AG04450 (cell line): ENCODE measurements at regions of chr2 and their contacts with region 1.

Region 1: DNA sequence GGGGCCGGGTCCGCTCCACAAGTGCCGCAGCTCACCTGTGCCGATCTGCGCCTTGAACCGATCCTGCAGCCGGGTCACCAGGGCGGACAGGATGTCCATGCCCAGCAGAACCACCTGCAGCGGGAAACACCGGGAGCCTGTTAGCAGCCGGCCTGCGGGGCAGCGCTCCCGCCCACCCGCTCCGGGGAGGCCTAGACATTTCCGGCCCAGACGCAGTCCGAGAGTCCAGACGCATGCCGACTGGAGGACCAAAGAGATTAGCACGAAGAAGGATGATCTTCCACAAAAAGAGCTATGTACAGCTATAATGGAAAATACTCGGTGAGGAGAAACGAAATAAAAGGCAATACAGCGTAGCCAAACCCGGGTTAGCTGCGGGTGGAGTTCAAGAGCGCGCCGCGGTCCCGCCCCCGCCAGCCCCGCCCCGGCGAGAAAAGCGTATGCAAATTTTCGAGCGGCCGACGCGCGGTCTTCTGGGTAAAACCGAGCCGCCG is 421 bp upstream of the RNU4ATAC start:
- DNase-seq: peak; percentile 24
- H3K4me3 ChIP-seq: peak overlapping the region; percentile 80
- H3K27ac ChIP-seq: peak overlapping the region; percentile 100
- H3K27me3 ChIP-seq: no peaks in the 10 kb centered on the region
- CTCF ChIP-seq: no peak

Region 2: DNA sequence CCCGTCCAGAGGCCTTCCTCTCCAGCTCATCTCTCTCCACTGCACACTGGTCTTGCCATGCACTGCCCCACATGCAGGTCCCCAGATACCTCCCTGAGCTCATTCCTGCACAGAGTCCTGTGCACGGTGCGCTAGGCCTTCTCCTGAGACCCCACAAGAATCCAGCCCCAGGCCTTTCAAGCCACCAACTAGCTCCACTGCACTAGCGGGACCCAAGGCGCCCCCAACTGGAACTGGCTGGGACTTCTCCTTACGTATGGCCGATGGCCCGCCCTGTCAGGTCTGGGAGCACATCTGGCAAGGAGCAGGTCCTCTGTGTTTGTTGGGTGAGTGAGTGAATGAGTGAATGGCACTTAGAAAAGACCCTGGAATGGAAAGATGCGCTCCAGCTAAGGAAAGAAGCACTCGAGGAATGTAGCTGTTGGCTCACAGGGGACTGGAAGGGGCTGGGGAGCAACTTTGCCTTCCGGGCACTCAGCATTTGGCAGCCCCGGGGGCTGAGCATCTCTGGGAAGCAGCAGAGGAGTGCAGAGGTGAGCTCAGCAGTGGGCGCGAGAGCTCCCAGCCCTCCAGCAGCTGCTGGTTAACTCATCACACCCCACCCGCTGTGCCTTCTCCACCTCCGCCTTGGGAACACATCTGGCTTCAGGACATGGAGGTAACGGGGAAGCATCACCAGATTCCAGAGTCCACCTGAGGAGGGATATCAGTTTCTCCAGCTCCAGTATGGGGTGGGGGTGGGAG is 571.5 kb before region 1 on chr2:
- CTCF ChIA-PET with region 1: no interaction called
- POLR2A ChIA-PET with region 1: no interaction called
- DNase-seq: no peak
- H3K4me3 ChIP-seq: no peak overlapping the region
- H3K27ac ChIP-seq: no peak overlapping the region
- H3K27me3 ChIP-seq: no peaks in the 10 kb centered on the region
- CTCF ChIP-seq: peak; percentile 37

Region 3: DNA sequence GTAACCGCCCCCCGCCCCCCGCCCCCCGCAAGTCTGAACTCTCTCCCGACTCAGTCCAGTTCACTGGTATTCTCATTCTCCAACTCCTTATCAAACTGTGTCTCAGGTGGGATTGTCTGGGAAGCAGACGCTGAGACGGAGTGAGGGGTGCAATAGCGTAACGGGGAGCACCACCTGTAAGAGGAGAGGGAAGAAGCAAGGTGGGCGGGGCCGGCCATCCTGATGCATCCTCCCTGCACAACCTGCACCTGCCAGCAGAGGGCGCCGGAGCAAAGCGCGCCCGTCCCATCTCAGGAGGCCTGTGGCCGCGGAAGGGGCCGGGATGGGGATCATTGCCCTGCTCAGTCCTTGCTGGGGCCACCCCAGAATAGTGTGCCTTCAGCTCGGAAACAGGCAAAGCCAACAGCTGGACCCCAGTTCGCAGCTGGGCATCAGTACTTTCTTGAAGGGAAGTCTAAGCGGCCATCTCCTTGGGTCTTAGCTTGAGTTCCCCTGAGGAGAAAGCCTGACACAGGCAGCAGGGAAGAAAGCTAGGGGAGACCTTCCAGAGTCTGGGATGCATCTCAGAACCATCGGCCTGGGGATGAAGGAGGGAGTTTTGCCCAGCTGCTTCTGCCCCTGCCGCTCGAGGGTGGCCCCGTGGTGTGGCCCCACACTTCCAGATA is 453.2 kb before region 1 on chr2:
- CTCF ChIA-PET with region 1: interaction called, 4 read pairs
- POLR2A ChIA-PET with region 1: interaction called, 14 read pairs
- DNase-seq: no peak
- H3K4me3 ChIP-seq: no peak overlapping the region
- H3K27ac ChIP-seq: no peak overlapping the region
- H3K27me3 ChIP-seq: peaks cover 34% of the 10 kb centered on the region
- CTCF ChIP-seq: peak; percentile 83

Region 4: GRCh38 chr2:121400201-121400600 is 130.1 kb before region 1 on chr2:
- CTCF ChIA-PET with region 1: interaction called, 10 read pairs
- POLR2A ChIA-PET with region 1: interaction called, 17 read pairs
- DNase-seq: peak; percentile 24
- H3K4me3 ChIP-seq: no peak overlapping the region
- H3K27ac ChIP-seq: no peak overlapping the region
- H3K27me3 ChIP-seq: no peaks in the 10 kb centered on the region
- CTCF ChIP-seq: no peak

Region 5: DNA sequence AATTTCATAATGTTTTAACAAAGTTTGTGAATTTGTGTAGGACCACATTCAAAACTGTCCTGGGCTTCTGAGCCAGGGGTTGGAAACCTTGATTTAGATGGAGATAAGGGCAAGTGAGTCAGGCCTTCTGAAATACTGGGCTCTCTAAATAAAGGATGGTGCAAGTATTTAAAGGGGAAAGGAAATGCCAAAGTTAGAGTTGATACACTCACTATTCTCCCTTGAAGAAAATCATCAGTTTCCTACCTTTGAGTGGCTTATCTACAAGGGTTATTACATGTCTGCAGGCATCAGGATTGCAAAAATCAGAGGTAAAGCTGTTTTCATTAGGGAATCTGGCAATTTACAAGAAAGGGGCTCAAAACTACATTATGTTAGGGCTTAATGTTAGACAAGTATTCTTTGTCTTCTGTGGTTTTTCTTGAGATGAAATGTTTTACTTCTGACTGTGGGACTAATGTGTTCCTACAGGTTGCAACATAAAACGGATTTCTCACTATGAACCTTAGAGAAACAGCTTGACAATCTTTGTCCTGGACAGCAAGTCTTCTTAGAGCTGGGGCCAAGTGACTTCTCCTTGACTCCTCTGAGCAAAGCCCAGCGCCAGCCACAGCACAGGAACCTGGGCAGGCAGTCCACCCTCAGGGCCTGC is 31.5 kb after region 1 on chr2:
- CTCF ChIA-PET with region 1: no interaction called
- POLR2A ChIA-PET with region 1: interaction called, 13 read pairs
- DNase-seq: no peak
- H3K4me3 ChIP-seq: no peak overlapping the region
- H3K27ac ChIP-seq: peak overlapping the region; percentile 48
- H3K27me3 ChIP-seq: no peaks in the 10 kb centered on the region
- CTCF ChIP-seq: no peak

Region 6: DNA sequence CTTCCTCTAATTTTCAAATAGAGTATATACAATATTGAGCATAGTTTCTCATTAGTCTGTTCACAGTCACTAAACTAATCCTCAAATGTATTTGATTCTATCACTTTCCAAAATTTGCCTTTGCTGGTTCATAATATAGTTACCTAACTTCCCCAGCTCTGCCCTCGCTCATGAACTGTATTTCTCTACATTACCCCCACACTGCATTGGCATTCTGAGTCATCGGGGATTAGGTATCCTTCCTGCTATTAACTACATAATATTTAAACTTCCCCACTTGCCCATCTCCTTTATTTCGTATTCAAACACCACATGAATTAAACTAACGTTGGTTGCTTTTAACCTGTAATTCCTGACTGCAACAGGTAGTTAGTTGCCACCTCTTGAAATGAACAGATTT is 133.8 kb after region 1 on chr2:
- CTCF ChIA-PET with region 1: no interaction called
- POLR2A ChIA-PET with region 1: no interaction called
- DNase-seq: no peak
- H3K4me3 ChIP-seq: no peak overlapping the region
- H3K27ac ChIP-seq: no peak overlapping the region
- H3K27me3 ChIP-seq: no peaks in the 10 kb centered on the region
- CTCF ChIP-seq: no peak

Region 7: GRCh38 chr2:121689356-121689755 is 159.1 kb after region 1 on chr2:
- CTCF ChIA-PET with region 1: interaction called, 4 read pairs
- POLR2A ChIA-PET with region 1: interaction called, 14 read pairs
- DNase-seq: peak; percentile 18
- H3K4me3 ChIP-seq: no peak overlapping the region
- H3K27ac ChIP-seq: no peak overlapping the region
- H3K27me3 ChIP-seq: no peaks in the 10 kb centered on the region
- CTCF ChIP-seq: peak; percentile 62

Region 8: GRCh38 chr2:121736462-121737341 is 206.4 kb after region 1 on chr2 and contains the start of gene NIFK:
- CTCF ChIA-PET with region 1: interaction called, 16 read pairs
- POLR2A ChIA-PET with region 1: interaction called, 30 read pairs
- DNase-seq: peak; percentile 90
- H3K4me3 ChIP-seq: peak within 1 kb of the TSS; percentile 98
- H3K27ac ChIP-seq: peak within 1 kb of the TSS; percentile 68
- H3K27me3 ChIP-seq: no peaks in the 10 kb centered on the region
- CTCF ChIP-seq: no peak
- polyA plus RNA-seq, gene NIFK: 34.1 and 52.8 TPM in 2 replicates